Motor neuron (in vitro differentiated cells): ENCODE measurements at regions of chr15 and their contacts with region 1.

Region 1: DNA sequence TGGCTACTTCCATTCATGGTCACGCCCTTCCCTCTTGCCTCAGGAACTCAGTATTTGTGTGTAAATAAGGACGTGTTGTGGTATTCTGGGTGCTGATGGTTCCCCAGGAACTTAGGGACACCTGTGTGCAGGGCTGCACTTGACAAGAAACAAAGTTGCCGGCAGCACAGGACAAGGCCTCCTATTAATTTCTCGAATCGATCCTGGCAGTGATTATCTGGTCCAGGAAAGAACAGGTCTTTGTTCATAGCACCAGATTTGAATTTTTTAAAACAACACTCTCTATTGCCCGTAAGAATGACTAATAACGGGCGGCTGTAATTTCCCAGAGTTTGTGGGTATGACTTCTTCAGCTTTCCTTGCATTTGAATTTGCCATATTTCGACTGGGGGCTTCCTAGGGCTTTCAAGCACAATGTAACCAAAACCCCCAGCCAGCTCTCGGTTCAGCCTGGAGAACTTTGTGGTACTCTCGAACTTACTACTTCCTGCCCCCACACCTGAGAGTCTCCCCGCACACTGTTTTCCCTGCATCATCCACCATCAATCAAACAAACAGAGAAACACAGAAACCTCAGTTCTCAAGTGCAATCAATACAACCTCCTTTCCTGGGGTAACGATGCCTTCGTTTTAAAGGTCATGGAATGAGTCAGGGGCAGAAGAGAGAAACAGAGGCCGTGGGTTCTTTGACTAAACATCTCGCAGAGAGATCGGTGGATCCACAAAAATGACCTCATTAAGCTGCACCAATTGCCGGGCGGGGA is 241.7 kb upstream of the ICE2 start:
- ATAC-seq: no peak
- H3K4me3 ChIP-seq: no peak overlapping the region
- H3K27ac ChIP-seq: no peak overlapping the region
- H3K4me1 ChIP-seq: no peaks in the 10 kb centered on the region

Region 2: GRCh38 chr15:59632714-59633113 is 1088.0 kb before region 1 on chr15:
- in situ Hi-C with region 1: no loop called
- ATAC-seq: peak in 5 of 8 experiments; percentile 36 to 86 (median 72)
- H3K4me3 ChIP-seq: no peak overlapping the region
- H3K27ac ChIP-seq: no peak overlapping the region
- H3K4me1 ChIP-seq: peaks cover 0 to 4% of the 10 kb centered on the region in 2 donors

Region 3: GRCh38 chr15:60804986-60805949 is 84.6 kb after region 1 on chr15:
- in situ Hi-C with region 1: loop called in 1 of 9 experiments (anchors 25 kb)
- ATAC-seq: peak; percentile 75 to 99 (median 98)
- H3K4me3 ChIP-seq: no peak overlapping the region
- H3K27ac ChIP-seq: no peak overlapping the region
- H3K4me1 ChIP-seq: peaks cover 7 to 9% of the 10 kb centered on the region in 2 donors